MCF 10A (cell line): ENCODE measurements at regions of chr3 and their contacts with region 1.

Region 1: GRCh38 chr3:184469423-184469822 is 89.6 kb downstream of the CHRD start:
- DNase-seq: peak; percentile 68
- H3K4me3 Mint-ChIP-seq: no peak overlapping the region
- H3K27ac Mint-ChIP-seq: no peak overlapping the region
- H3K4me1 Mint-ChIP-seq: no peaks in the 10 kb centered on the region
- H3K27me3 Mint-ChIP-seq: peaks cover 44% of the 10 kb centered on the region
- CTCF ChIP-seq: peak; percentile 78

Region 2: GRCh38 chr3:184314363-184314699 is 155.1 kb before region 1 on chr3 and contains the start of gene EIF4G1:
- CTCF ChIA-PET with region 1: no interaction called
- POLR2A ChIA-PET with region 1: no interaction called
- intact Hi-C with region 1: no loop called
- DNase-seq: peak; percentile 89
- H3K4me3 Mint-ChIP-seq: peak within 1 kb of the TSS; percentile 87
- H3K27ac Mint-ChIP-seq: peak within 1 kb of the TSS; percentile 88
- H3K4me1 Mint-ChIP-seq: peaks cover 27% of the 10 kb centered on the region
- H3K27me3 Mint-ChIP-seq: no peaks in the 10 kb centered on the region
- CTCF ChIP-seq: no peak
- total RNA-seq, gene EIF4G1: 522 and 536 TPM in 2 replicates

Region 3: DNA sequence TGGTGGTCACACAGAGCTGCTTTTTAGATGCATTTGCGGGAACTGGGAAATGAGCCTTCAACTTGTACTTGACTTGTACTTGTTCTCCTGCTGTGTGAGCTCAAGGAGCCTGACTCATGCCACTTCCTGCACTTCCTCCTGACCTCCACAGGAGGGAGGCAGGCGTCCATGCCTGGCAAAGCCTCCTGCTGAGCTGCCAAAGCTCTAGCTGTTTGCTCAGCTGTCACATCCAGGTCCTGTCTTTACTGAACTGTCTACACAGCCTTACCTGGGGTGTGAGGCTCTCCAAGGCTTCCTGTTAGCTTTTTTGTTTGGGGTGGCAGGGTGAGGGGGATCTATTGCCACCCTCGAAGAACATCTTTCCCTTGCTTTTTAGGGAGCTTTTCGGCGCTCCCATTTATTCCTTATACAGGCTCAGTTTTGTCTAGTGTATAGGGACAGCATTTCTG is 97.8 kb before region 1 on chr3:
- CTCF ChIA-PET with region 1: interaction called, 67 read pairs
- POLR2A ChIA-PET with region 1: interaction called, 10 read pairs
- intact Hi-C with region 1: loop called (anchors 1 kb)
- DNase-seq: peak; percentile 86
- H3K4me3 Mint-ChIP-seq: no peak overlapping the region
- H3K27ac Mint-ChIP-seq: no peak overlapping the region
- H3K4me1 Mint-ChIP-seq: peaks cover 11% of the 10 kb centered on the region
- H3K27me3 Mint-ChIP-seq: peaks cover 23% of the 10 kb centered on the region
- CTCF ChIP-seq: peak; percentile 94

Region 4: DNA sequence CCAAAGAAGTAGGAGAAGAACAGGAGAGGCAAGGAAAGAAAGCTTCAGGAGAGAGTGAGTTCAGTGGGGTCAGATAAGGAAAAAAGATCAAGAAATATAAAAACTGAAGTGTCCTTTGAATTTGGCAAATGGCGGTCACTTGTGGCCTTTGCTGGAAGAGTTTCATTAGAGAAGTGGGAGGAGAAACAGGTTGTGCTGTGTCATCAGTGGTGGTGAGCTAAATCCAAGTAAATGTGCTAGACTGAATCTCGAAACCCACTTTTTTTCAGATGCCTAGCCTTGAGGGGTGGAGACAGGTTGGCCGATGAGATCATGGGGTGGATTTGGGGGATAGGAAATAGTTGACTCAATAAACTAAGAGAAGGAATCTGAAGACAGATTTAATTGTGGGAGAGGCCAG is 45.9 kb before region 1 on chr3:
- CTCF ChIA-PET with region 1: interaction called, 112 read pairs
- POLR2A ChIA-PET with region 1: interaction called, 3 read pairs
- intact Hi-C with region 1: no loop called
- DNase-seq: no peak
- H3K4me3 Mint-ChIP-seq: no peak overlapping the region
- H3K27ac Mint-ChIP-seq: no peak overlapping the region
- H3K4me1 Mint-ChIP-seq: peaks cover 10% of the 10 kb centered on the region
- H3K27me3 Mint-ChIP-seq: peaks cover 16% of the 10 kb centered on the region
- CTCF ChIP-seq: no peak

Region 5: GRCh38 chr3:184448311-184449160 is 20.9 kb before region 1 on chr3:
- CTCF ChIA-PET with region 1: interaction called, 15 read pairs
- POLR2A ChIA-PET with region 1: interaction called, 5 read pairs
- intact Hi-C with region 1: no loop called
- DNase-seq: peak; percentile 93
- H3K4me3 Mint-ChIP-seq: no peak overlapping the region
- H3K27ac Mint-ChIP-seq: peak overlapping the region; percentile 46
- H3K4me1 Mint-ChIP-seq: peaks cover 12% of the 10 kb centered on the region
- H3K27me3 Mint-ChIP-seq: no peaks in the 10 kb centered on the region
- CTCF ChIP-seq: no peak

Region 6: GRCh38 chr3:184481984-184482671 is 12.7 kb after region 1 on chr3:
- CTCF ChIA-PET with region 1: interaction called, 35 read pairs
- POLR2A ChIA-PET with region 1: interaction called, 3 read pairs
- intact Hi-C with region 1: no loop called
- DNase-seq: no peak
- H3K4me3 Mint-ChIP-seq: no peak overlapping the region
- H3K27ac Mint-ChIP-seq: no peak overlapping the region
- H3K4me1 Mint-ChIP-seq: no peaks in the 10 kb centered on the region
- H3K27me3 Mint-ChIP-seq: peaks cover 28% of the 10 kb centered on the region
- CTCF ChIP-seq: no peak

Region 7: DNA sequence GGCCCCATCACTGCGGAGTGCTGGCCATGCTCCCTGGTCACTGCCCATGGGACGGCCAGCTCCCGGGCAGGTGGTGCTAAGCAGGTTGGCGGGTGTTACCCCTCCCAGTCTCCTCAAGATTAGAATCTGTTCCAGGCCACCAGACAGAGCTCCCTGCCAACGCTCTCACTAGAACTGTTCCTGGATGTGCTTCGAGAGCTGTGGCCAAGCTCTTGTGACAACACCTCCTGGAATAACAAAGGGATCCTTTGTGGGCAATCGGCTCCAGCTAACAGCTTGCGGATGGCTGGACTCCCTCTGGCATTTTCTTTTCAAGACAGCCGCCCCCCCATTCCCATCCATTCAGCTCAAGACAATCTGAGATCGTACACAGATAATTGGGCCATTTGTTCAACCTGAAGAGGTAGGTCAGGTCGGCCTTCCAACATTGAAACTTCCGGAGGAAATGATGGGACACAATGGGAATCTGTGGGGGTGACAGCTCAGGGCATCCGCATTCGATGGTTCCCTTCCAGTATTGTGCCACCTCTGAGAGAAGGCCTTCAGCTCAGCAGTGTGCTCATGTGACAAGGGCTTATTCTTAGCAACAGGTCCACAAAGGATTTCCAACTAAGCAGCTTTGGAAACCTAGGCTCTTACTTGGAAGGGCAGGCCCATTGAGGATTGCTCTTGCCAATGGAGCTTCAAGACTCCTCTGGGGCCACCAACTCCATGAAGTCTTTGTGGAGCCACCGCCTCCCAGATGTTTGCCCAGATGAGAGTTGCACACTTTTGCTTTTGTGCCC is 80.6 kb after region 1 on chr3:
- CTCF ChIA-PET with region 1: interaction called, 162 read pairs
- POLR2A ChIA-PET with region 1: no interaction called
- intact Hi-C with region 1: no loop called
- DNase-seq: no peak
- H3K4me3 Mint-ChIP-seq: no peak overlapping the region
- H3K27ac Mint-ChIP-seq: no peak overlapping the region
- H3K4me1 Mint-ChIP-seq: peaks cover 4% of the 10 kb centered on the region
- H3K27me3 Mint-ChIP-seq: peaks cover 35% of the 10 kb centered on the region
- CTCF ChIP-seq: no peak